ENCODE measurements at regions of chr16 and their contacts with region 1.

Region 1: DNA sequence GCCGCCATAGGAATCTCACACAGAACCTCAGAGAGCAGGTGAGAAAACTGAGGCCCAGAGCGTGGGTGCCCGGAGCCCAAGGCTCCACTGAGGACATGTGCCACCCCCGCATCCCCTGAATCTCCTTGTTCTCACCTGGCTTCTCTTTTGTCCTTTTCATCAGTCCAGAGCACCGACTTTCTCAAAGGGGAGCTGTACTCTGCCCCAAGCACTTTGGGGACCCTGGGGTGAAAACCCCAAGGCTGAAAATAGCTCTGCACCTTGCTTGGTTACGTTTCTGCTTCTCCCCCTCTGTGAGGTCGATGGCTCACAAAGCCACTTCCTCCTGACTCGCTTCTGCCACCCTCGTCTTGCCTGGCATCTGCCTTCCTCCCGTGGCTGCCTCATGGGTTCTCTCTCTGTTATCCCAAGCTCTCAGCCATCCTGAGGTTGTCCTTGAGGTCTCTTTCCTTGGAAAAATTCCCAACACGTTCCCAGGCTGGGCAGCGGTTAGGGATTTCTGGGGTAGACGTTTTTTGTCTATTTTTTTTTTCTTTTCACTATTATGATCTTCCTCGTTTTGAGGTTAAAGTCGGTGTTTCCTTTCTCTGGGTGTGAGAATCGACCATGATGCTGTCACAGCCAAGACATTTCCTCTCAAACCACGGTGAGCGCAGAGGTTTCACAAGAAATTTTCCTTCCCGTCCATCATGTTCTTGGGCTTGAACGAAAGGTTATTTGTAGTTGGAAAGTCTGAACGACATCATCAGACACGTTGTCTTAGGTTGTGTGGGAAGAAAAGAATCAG is 37.2 kb downstream of the IRF8 start:
- DNase-seq: peak; percentile 62
- H3K4me3 Mint-ChIP-seq: peak overlapping the region; percentile 8
- H3K27ac Mint-ChIP-seq: peak overlapping the region; percentile 90
- H3K4me1 Mint-ChIP-seq: peaks cover 55% of the 10 kb centered on the region
- H3K27me3 Mint-ChIP-seq: peaks cover 3% of the 10 kb centered on the region

Region 2: DNA sequence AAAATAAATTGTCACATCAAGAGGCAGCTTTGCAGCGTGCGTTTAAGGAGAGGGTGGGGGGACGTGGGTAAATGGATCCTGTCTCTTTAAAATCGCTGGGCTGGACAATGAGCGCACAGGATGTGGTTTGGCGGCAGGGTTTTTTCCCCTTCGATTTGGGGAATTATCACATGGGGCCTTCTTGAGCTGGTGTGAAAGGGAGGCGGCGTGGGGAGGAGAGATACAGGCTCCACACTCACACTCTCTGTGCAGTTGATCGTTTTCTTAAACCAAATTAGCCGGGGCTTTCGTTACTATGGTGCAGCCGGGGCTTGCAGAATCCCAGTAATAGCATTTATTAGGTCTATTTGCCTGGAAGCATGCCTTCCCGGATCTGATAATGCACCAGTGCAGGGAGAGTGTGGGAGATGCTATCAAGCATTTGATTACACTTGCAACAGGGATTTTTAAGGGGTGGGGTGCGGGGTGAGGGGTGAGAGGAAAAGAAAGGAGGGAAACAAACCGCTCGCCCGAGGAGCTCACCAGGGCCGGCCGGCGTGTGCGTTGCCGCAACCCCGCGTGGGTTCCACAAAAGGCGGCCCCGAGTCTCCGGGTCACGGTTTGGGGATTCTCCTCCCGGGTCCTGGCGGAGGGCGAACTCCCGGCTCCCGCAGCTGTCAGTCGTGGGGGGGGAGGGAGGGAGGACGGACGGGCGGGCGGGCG is 381.9 kb before region 1 on chr16:
- intact Hi-C with region 1: loop called (anchors 2 kb)
- DNase-seq: peak; percentile 75
- H3K4me3 Mint-ChIP-seq: peak overlapping the region; percentile 90
- H3K27ac Mint-ChIP-seq: peak overlapping the region; percentile 95
- H3K4me1 Mint-ChIP-seq: peaks cover 34% of the 10 kb centered on the region
- H3K27me3 Mint-ChIP-seq: peaks cover 5% of the 10 kb centered on the region

Region 3: DNA sequence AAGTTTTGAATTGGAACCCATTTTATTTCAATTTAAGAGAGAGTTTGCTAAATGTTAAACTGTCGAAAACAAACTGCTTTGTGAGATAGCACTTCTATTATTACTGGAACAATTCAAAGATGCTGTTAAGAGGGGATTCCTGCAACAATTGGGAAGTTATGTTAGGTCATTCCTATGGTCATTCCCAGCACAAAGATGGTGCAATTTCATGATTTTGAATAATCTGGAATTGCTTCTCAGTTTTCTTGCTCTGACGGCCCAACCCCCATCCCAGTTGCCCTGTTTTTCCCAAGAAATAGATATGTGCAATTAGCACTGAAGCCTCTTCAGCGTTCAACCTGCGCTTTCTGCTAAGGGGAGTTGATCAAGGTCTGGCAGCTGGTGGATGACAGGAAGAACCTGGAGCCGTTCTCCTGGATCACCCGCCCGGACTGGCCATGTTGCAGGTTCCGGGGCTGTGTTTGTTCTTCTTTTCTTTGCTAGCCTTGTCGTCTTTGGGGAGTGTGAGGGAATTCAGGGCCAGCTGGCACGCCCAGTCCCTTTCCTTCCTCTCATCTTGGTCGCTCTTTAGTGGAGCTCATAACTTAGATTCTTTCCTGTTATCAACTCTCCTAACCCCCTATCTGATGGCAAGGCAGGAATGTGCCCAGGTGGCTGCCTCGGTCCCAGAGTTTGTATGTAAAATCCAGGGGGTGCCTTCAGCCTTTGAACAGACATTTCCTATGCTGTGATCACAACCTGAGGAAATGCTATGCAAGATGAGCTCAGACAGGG is 66.2 kb before region 1 on chr16:
- intact Hi-C with region 1: loop called (anchors 1 kb)
- DNase-seq: no peak
- H3K4me3 Mint-ChIP-seq: no peak overlapping the region
- H3K27ac Mint-ChIP-seq: peak overlapping the region; percentile 31
- H3K4me1 Mint-ChIP-seq: peaks cover 28% of the 10 kb centered on the region
- H3K27me3 Mint-ChIP-seq: peaks cover 29% of the 10 kb centered on the region

Region 4: DNA sequence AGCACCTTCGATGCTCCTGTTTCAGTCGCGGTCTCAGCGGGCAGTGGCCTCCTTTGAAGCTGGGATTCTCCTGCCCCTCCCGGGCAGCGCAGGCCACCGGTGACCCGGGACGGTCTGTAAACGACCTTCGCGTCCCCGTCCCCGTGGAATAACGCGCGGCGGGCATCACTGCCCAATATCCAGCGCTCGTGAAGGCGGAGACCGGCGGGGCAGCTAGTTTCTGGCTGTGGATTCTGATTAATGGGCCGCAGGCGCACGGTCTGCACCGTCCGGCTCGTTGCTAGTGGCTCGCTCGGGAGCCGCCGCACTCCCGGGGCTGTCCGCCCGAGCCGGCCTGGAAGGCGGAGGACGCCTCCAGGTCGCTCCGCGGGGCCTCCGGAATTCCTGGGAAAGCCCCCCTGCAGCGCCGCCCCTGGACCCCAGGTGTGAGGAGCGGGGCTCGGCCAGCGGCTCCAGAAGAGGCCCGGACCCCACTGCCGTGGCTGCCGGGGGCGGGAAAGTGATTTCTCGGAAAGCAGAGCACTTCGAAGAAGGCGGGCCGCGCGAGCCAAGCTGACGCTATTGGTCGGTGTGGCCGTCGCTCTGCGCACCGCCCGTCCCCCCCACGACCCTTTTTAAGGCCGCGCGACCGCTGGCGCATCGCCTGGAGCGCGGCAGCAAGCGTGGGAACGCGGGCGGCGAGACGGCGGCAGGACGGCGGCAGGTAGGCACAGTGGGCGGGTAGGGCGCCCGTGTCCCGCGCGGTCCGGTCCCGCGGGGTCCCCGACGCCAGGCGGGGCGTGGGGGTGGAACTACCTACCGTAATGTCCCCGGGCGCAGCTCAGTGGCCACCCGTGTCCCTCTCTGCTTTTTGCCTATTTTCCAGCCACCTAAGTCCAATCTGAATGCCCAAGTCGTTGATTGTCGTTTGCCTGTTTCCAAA is 37.4 kb before region 1 on chr16 and contains the start of gene IRF8:
- intact Hi-C with region 1: loop called (anchors 1 kb)
- DNase-seq: peak; percentile 67
- H3K4me3 Mint-ChIP-seq: peak within 1 kb of the TSS; percentile 88
- H3K27ac Mint-ChIP-seq: peak within 1 kb of the TSS; percentile 78
- H3K4me1 Mint-ChIP-seq: peaks cover 60% of the 10 kb centered on the region
- H3K27me3 Mint-ChIP-seq: peaks cover 28% of the 10 kb centered on the region
- total RNA-seq, gene IRF8: 158 and 166 TPM in 2 replicates

Region 5: DNA sequence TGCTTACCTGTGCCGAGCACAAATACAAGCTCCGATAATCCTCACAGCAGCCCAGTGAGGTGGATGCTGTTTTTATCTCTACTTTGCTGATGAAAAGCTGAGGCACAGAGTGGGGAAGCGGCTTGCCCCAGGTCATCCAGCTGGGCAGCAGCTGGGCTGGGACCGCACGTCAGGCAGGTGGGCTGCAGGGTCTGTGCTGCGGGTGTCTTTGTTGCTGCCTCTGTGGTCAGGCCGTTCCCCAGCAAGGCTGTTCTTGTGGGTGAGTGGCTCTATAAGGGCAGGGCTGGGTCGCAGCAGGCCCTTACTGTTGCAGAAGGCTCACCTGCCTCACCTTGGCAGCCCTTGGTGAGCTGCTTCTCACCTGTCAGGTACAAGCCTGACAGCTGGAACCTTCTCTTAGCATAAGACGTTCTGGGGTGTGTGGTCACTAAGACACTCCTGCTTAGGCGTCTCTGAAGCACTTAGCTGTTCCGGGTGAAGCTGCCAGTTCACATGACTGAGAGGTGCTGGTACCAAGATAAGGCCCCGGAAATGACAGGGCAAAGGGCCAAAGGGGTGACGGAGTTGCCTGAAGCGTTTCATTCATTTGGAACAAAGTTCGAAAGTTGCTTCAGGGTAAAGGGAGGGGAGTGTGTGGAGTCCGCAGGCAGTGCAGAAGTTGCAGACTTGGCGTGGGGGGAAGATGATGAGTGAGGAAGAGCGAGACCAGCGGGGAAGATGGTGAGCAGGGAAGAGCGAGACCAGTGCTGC is 19.9 kb before region 1 on chr16:
- intact Hi-C with region 1: no loop called
- DNase-seq: no peak
- H3K4me3 Mint-ChIP-seq: no peak overlapping the region
- H3K27ac Mint-ChIP-seq: no peak overlapping the region
- H3K4me1 Mint-ChIP-seq: peaks cover 14% of the 10 kb centered on the region
- H3K27me3 Mint-ChIP-seq: peaks cover 2% of the 10 kb centered on the region

Region 6: GRCh38 chr16:85969159-85969558 is 33.0 kb after region 1 on chr16:
- intact Hi-C with region 1: loop called (anchors 2 kb)
- DNase-seq: no peak
- H3K4me3 Mint-ChIP-seq: no peak overlapping the region
- H3K27ac Mint-ChIP-seq: peak overlapping the region; percentile 18
- H3K4me1 Mint-ChIP-seq: peaks cover 37% of the 10 kb centered on the region
- H3K27me3 Mint-ChIP-seq: peaks cover 5% of the 10 kb centered on the region

Measured in activated T-helper 1 cell treated with anti-CD3 and anti-CD28 coated beads, Interleukin-12 subunit alpha, Interleukin-12 subunit beta, Interleukin-2, Interleukin-4 antibody, amounts not matched to agents 30 ng/mL and 10 ng/mL and 1 ng/mL, durations not matched to agents 14 hours and 24 hours and 36 hours (primary cell).